Activated CD4-positive, alpha-beta T cell treated with anti-CD3 and anti-CD28 coated beads, Interleukin-2, amount 10 ng/mL, durations not matched to agents 7 days and 5 days (primary cell): ENCODE measurements at regions of chr5 and their contacts with region 1.

Region 1: GRCh38 chr5:139422307-139422893 is 16.9 kb downstream of the DNAJC18 start:
- DNase-seq: peak; percentile 77
- H3K4me3 Mint-ChIP-seq: no peak overlapping the region
- H3K27ac Mint-ChIP-seq: no peak overlapping the region
- H3K4me1 Mint-ChIP-seq: peaks cover 26% of the 10 kb centered on the region
- H3K27me3 Mint-ChIP-seq: no peaks in the 10 kb centered on the region

Region 2: DNA sequence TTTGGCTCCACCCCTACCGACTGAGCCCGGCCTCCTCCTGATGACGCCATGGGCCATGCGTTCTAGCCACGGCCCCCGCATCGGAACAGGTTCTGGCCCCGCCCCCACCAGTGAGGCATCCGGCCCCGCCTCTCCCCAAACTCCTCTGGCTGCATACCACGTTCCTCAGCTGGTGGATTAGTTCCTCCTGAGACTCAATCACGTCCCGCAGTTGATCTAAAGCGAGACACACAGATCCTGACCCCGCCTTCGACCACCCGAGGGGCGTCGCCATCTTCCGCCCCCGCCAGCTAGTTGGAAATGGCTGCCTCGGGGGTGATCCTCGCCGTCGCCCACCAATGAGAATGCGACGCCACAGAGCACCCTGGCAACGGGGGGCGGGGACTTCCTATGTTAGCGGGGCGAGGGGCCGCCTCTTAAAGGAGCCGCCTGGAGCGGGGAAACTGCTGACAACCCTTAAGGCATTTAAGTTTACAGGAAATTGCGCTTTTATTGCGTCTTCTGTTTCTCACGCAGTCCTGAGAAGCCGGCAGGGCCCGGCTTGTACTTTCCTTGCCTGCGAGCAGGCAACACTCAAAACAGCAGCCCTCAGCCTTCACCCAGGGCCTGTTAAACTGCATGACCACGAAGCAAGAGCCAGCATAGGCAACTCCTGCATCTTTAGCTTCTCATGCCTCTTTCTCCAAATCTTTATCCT is 18.5 kb before region 1 on chr5 and contains the start of gene SPATA24:
- CTCF ChIA-PET with region 1: interaction called, 12 read pairs
- POLR2A ChIA-PET with region 1: no interaction called
- DNase-seq: peak; percentile 99
- H3K4me3 Mint-ChIP-seq: peak within 1 kb of the TSS; percentile 92
- H3K27ac Mint-ChIP-seq: peak within 1 kb of the TSS; percentile 100
- H3K4me1 Mint-ChIP-seq: peaks cover 47% of the 10 kb centered on the region
- H3K27me3 Mint-ChIP-seq: no peaks in the 10 kb centered on the region
- total RNA-seq, gene SPATA24: 5.5 to 7.2 TPM

Region 3: GRCh38 chr5:139410993-139411828 is 11.2 kb before region 1 on chr5:
- CTCF ChIA-PET with region 1: interaction called, 21 read pairs
- POLR2A ChIA-PET with region 1: no interaction called
- DNase-seq: no peak
- H3K4me3 Mint-ChIP-seq: no peak overlapping the region
- H3K27ac Mint-ChIP-seq: no peak overlapping the region
- H3K4me1 Mint-ChIP-seq: peaks cover 50% of the 10 kb centered on the region
- H3K27me3 Mint-ChIP-seq: no peaks in the 10 kb centered on the region

Region 4: DNA sequence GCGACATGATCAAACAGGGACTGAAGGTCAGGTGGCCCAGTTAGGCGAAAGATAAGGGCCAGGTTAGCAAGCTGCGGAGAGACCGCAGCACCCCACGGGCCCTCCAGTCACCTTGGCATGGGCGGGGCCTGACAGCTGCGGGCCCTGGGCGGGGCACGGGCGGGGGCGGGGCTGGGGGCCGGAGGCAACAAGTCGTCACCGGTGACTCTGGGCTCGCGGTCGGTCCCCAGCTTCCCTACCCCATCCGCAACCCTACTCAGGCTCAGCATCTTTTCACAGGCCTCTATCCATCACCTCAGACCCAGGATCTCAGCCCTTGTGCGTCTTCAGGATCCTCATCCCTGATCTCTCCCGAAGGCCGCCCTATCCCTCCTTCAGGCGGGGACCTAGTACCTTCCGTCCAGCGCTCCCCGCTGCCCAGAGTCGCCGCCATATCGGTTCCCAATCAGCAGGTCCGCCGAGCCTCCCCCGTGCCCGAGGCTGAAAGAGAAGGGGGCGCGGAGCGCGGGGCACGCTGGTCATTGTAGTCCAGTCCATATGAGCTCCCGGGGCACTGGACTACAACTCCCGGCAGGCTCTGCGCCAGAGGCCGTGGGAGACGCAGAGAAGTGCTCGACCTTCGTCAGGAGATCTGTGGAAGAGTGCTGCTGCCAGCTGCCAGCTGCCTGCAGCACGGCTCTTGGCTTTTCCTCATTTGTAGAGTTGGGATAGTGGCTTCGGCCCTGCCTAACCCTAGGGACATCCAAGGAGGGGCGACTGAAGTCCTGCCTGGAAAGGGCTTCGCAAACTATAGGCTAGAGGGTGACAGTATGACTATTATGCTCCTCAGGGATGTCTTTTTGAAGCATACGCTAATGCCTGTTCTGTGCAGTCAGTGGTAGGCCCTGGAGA is 16.9 kb after region 1 on chr5 and contains the start of gene DNAJC18:
- CTCF ChIA-PET with region 1: interaction called, 49 read pairs
- POLR2A ChIA-PET with region 1: no interaction called
- DNase-seq: peak; percentile 93
- H3K4me3 Mint-ChIP-seq: peak within 1 kb of the TSS; percentile 94
- H3K27ac Mint-ChIP-seq: peak within 1 kb of the TSS; percentile 99
- H3K4me1 Mint-ChIP-seq: peaks cover 59% of the 10 kb centered on the region
- H3K27me3 Mint-ChIP-seq: no peaks in the 10 kb centered on the region
- total RNA-seq, gene DNAJC18: 4.5 to 6.8 TPM

Region 5: DNA sequence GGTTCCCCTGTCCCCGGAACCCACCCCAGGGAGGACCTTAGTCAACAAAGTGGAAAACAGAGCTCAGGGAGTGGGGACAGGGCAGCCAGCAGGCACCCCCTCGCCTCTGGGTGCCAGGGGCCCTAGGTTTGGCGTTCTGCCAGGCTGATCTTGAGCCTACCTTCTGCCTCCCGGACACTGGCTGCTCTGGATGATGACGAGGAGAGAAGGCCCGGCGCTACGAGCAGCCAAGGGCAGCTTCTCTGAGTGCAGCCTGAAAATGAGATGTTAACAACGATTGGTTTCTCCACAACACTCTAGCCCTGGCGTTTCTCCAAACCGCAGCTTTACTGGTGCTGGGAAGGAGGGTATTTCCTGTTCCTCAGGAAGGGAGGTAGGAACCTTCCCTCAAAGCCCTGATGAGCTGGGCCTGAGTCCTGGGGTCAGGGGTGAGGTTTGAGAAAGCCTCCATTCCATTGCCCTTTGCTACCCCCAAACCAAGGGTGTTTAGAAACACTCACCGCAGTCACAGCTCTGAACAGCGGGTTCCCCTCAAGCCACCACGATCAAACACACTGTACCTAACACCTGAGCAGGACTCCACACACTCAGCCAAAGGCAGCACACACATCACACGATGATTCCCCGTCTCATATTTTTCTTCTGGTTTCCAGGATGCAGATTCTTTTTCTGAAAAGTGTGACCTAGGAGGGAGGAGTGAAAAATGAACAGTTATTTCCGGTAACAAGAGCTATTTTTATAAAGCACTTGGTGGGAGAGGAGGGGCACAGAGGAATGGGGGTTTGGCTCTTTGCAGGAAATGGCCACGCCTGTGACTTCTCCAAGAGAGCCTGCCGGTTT is 59.9 kb after region 1 on chr5 and contains the start of gene STING1:
- CTCF ChIA-PET with region 1: interaction called, 14 read pairs
- POLR2A ChIA-PET with region 1: no interaction called
- DNase-seq: peak; percentile 73
- H3K4me3 Mint-ChIP-seq: peak within 1 kb of the TSS; percentile 82
- H3K27ac Mint-ChIP-seq: peak within 1 kb of the TSS; percentile 95
- H3K4me1 Mint-ChIP-seq: peaks cover 43% of the 10 kb centered on the region
- H3K27me3 Mint-ChIP-seq: no peaks in the 10 kb centered on the region
- total RNA-seq, gene STING1: 175 TPM